CD4-positive, alpha-beta T cell (primary cell): ENCODE measurements at regions of chr20 and their contacts with region 1.

Region 1: DNA sequence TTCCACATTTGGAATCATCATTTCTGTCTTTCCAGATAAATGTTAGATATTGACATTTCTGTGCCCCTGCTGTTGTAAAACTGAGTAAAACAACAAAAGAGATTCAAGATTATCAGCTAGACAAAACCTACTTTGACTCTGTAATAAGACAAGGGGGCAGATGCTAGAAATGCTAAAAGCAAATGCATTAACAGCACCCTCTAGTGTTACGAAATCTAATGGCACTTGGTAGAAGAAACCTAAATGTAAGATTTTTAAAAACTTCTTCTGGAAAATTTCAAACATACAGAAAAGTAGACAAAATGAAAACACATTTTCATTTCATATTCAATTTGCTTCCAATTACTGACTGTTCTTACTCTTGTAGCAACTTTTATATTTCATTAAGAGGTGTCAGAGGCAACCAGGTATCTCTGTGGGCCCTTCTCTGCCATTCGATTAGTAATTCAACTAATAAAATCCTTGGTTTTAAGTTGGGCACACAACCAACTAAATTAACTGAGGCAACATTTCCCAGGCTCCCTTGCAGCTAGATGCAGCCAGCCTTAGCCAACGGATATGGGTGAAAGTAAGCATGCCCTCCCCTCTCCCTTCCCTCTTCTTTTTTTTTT is 45.0 kb downstream of the SLC23A2 start:
- DNase-seq: peak in 3 of 14 experiments; percentile 70 to 80 (median 78)
- ATAC-seq: peak; percentile 84
- H3K4me3 ChIP-seq: no peak overlapping the region
- H3K4me3 Mint-ChIP-seq: no peak overlapping the region
- H3K27ac ChIP-seq: no peak overlapping the region
- H3K27ac Mint-ChIP-seq: peak overlapping the region; percentile 52
- H3K4me1 ChIP-seq: peaks cover 1% of the 10 kb centered on the region
- H3K4me1 Mint-ChIP-seq: peaks cover 8% of the 10 kb centered on the region
- H3K27me3 ChIP-seq: no peaks in the 10 kb centered on the region
- H3K27me3 Mint-ChIP-seq: no peaks in the 10 kb centered on the region
- CTCF ChIP-seq: peak; percentile 96

Region 2: GRCh38 chr20:4740774-4741431 is 215.4 kb before region 1 on chr20:
- CTCF ChIA-PET with region 1: interaction called, 3 read pairs
- POLR2A ChIA-PET with region 1: no interaction called
- intact Hi-C with region 1: loop called (anchors 5 kb)
- DNase-seq: peak; percentile 51 to 78 (median 59)
- ATAC-seq: peak; percentile 26
- H3K4me3 ChIP-seq: no peak overlapping the region
- H3K4me3 Mint-ChIP-seq: no peak overlapping the region
- H3K27ac ChIP-seq: no peak overlapping the region
- H3K27ac Mint-ChIP-seq: no peak overlapping the region
- H3K4me1 ChIP-seq: peaks cover 5% of the 10 kb centered on the region
- H3K4me1 Mint-ChIP-seq: peaks cover 5% of the 10 kb centered on the region
- H3K27me3 ChIP-seq: peaks cover 0 to 3% of the 10 kb centered on the region in 2 experiments
- H3K27me3 Mint-ChIP-seq: peaks cover 17% of the 10 kb centered on the region
- CTCF ChIP-seq: peak; percentile 92

Region 3: DNA sequence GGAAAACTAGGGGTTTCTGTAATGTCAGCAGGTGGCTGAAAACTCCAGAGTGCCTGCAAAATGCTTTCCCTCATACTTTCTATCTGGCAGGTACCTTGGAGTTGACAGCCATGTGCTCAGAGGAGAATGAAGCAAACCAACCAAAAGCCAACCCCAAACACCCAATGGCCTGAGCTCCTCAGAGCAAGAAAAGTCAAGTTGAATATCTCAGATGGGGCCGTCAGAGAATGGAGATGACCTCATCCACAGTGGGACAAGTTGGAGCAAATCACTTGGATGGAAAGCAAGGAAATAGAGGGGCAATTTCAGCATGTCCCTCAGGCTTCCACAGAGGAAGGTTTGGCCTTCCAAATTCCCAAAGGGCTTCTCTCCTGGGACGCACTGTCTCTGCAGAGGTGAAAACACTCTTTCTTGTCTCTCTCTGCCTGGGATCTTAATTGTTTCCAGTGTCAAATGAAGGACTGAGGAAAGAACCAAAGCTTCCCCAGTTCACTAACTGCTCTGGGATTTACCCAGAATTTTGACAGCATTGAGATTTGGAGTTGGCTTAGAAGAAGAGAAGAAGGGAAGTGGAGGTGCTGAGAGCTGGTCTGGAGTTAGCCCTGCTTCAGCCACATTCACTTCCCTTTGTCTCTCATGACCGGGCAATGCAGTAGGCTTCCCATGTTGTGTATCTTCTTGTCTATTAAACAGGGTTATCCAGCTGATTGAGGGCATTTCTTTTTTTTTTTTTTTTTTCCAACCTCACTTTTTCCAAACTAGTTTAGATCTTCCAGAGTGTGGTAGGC is 192.4 kb before region 1 on chr20:
- CTCF ChIA-PET with region 1: interaction called, 12 read pairs
- POLR2A ChIA-PET with region 1: no interaction called
- intact Hi-C with region 1: no loop called
- DNase-seq: peak in 2 of 14 experiments; percentile 25
- ATAC-seq: no peak
- H3K4me3 ChIP-seq: no peak overlapping the region
- H3K4me3 Mint-ChIP-seq: no peak overlapping the region
- H3K27ac ChIP-seq: no peak overlapping the region
- H3K27ac Mint-ChIP-seq: no peak overlapping the region
- H3K4me1 ChIP-seq: peaks cover 10% of the 10 kb centered on the region
- H3K4me1 Mint-ChIP-seq: peaks cover 8% of the 10 kb centered on the region
- H3K27me3 ChIP-seq: no peaks in the 10 kb centered on the region
- H3K27me3 Mint-ChIP-seq: no peaks in the 10 kb centered on the region
- CTCF ChIP-seq: no peak

Region 4: GRCh38 chr20:4813863-4814695 is 142.2 kb before region 1 on chr20:
- CTCF ChIA-PET with region 1: interaction called, 3 read pairs
- POLR2A ChIA-PET with region 1: interaction called, 3 read pairs
- intact Hi-C with region 1: loop called in 1 of 2 experiments (anchors 5 kb)
- DNase-seq: peak; percentile 42 to 95 (median 60)
- ATAC-seq: peak; percentile 72
- H3K4me3 ChIP-seq: peak overlapping the region; percentile 65
- H3K4me3 Mint-ChIP-seq: peak overlapping the region; percentile 89
- H3K27ac ChIP-seq: peak overlapping the region; percentile 97 to 99
- H3K27ac Mint-ChIP-seq: peak overlapping the region; percentile 98
- H3K4me1 ChIP-seq: peaks cover 76% of the 10 kb centered on the region
- H3K4me1 Mint-ChIP-seq: peaks cover 72% of the 10 kb centered on the region
- H3K27me3 ChIP-seq: no peaks in the 10 kb centered on the region
- H3K27me3 Mint-ChIP-seq: no peaks in the 10 kb centered on the region
- CTCF ChIP-seq: no peak

Region 5: GRCh38 chr20:5100684-5101347 is 144.5 kb after region 1 on chr20:
- CTCF ChIA-PET with region 1: no interaction called
- POLR2A ChIA-PET with region 1: no interaction called
- intact Hi-C with region 1: loop called in 1 of 2 experiments (anchors 5 kb)
- DNase-seq: peak; percentile 60 to 86 (median 74)
- ATAC-seq: peak; percentile 95
- H3K4me3 ChIP-seq: no peak overlapping the region
- H3K4me3 Mint-ChIP-seq: no peak overlapping the region
- H3K27ac ChIP-seq: no peak overlapping the region
- H3K27ac Mint-ChIP-seq: peak overlapping the region; percentile 52
- H3K4me1 ChIP-seq: no peaks in the 10 kb centered on the region
- H3K4me1 Mint-ChIP-seq: peaks cover 17% of the 10 kb centered on the region
- H3K27me3 ChIP-seq: no peaks in the 10 kb centered on the region
- H3K27me3 Mint-ChIP-seq: no peaks in the 10 kb centered on the region
- CTCF ChIP-seq: peak; percentile 97